WTC11 (cell line): ENCODE measurements at regions of chr17 and their contacts with region 1.

Region 1: DNA sequence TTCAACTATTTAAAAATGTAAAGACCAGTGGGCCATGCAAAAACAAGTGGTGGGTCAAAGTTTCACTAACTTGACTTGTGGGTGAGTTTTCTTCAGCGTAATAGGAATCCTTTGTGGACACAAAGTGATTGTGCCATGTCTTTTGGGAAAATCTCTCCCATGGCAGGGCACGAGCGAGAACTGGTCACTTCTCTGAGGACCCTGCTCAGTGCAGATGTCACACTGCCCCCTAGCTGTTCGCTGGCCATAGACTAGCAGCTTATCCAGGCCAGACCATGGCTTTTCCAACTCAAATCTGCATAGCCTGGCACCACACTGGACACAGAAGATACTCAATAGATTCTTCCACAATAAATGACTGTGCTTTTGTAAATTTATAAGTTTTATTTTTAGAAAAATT is 306.0 kb upstream of the CCL2 start:
- DNase-seq: peak; percentile 80
- ATAC-seq: peak; percentile 94
- H3K4me3 Mint-ChIP-seq: no peak overlapping the region
- H3K27ac Mint-ChIP-seq: no peak overlapping the region
- H3K4me1 Mint-ChIP-seq: peaks cover 2% of the 10 kb centered on the region; the same call in 1 of the 2 replicates
- H3K27me3 Mint-ChIP-seq: no peaks in the 10 kb centered on the region
- CTCF ChIP-seq: peak; percentile 66

Region 2: GRCh38 chr17:33779225-33779591 is 169.9 kb before region 1 on chr17:
- CTCF ChIA-PET with region 1: interaction called, 17 read pairs
- POLR2A ChIA-PET with region 1: no interaction called
- DNase-seq: peak; percentile 45
- ATAC-seq: peak; percentile 22; the same call in 1 of the 2 replicates
- H3K4me3 Mint-ChIP-seq: no peak overlapping the region
- H3K27ac Mint-ChIP-seq: no peak overlapping the region
- H3K4me1 Mint-ChIP-seq: peaks cover 5% of the 10 kb centered on the region; the same call in 1 of the 2 replicates
- H3K27me3 Mint-ChIP-seq: no peaks in the 10 kb centered on the region; the same call in 1 of the 2 replicates
- CTCF ChIP-seq: peak; percentile 99

Region 3: GRCh38 chr17:33914125-33914524 is 35.0 kb before region 1 on chr17:
- CTCF ChIA-PET with region 1: no interaction called
- POLR2A ChIA-PET with region 1: no interaction called
- DNase-seq: no peak
- ATAC-seq: no peak
- H3K4me3 Mint-ChIP-seq: no peak overlapping the region
- H3K27ac Mint-ChIP-seq: no peak overlapping the region
- H3K4me1 Mint-ChIP-seq: no peaks in the 10 kb centered on the region
- H3K27me3 Mint-ChIP-seq: no peaks in the 10 kb centered on the region; the same call in 1 of the 2 replicates
- CTCF ChIP-seq: no peak

Region 4: GRCh38 chr17:33927732-33928133 is 21.4 kb before region 1 on chr17:
- CTCF ChIA-PET with region 1: interaction called, 20 read pairs
- POLR2A ChIA-PET with region 1: no interaction called
- DNase-seq: no peak
- ATAC-seq: no peak
- H3K4me3 Mint-ChIP-seq: no peak overlapping the region
- H3K27ac Mint-ChIP-seq: no peak overlapping the region
- H3K4me1 Mint-ChIP-seq: peaks cover 53% of the 10 kb centered on the region
- H3K27me3 Mint-ChIP-seq: no peaks in the 10 kb centered on the region
- CTCF ChIP-seq: no peak

Region 5: GRCh38 chr17:33936764-33937163 is 12.3 kb before region 1 on chr17:
- CTCF ChIA-PET with region 1: interaction called, 11 read pairs
- POLR2A ChIA-PET with region 1: no interaction called
- DNase-seq: no peak
- ATAC-seq: no peak
- H3K4me3 Mint-ChIP-seq: no peak overlapping the region
- H3K27ac Mint-ChIP-seq: no peak overlapping the region
- H3K4me1 Mint-ChIP-seq: peaks cover 26% of the 10 kb centered on the region
- H3K27me3 Mint-ChIP-seq: peaks cover 5% of the 10 kb centered on the region
- CTCF ChIP-seq: no peak

Region 6: DNA sequence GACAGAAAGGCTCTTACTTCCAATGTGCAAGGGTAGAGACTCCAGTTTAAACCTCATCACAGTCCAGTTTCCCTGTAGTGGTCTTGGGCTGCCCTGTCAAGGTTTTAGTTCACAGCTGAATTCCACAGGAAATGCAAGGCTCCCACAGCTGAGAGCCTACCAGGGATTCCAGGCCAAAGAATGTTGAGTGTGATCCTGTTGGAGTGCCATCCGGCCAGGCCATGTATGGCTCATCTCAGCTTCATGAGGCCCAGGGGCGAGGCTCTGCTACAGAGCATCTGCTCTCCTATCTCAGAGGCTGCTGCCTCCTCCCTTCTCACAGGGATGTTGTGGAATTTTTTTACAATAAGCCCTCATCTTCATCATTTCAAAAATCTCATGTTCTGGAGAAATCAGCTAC is 66.2 kb after region 1 on chr17:
- CTCF ChIA-PET with region 1: no interaction called
- POLR2A ChIA-PET with region 1: no interaction called
- DNase-seq: no peak
- ATAC-seq: no peak
- H3K4me3 Mint-ChIP-seq: no peak overlapping the region
- H3K27ac Mint-ChIP-seq: no peak overlapping the region
- H3K4me1 Mint-ChIP-seq: peaks cover 15% of the 10 kb centered on the region
- H3K27me3 Mint-ChIP-seq: no peaks in the 10 kb centered on the region; the same call in 1 of the 2 replicates
- CTCF ChIP-seq: no peak